ENCODE measurements at regions of chr11 and their contacts with region 1.

Region 1: DNA sequence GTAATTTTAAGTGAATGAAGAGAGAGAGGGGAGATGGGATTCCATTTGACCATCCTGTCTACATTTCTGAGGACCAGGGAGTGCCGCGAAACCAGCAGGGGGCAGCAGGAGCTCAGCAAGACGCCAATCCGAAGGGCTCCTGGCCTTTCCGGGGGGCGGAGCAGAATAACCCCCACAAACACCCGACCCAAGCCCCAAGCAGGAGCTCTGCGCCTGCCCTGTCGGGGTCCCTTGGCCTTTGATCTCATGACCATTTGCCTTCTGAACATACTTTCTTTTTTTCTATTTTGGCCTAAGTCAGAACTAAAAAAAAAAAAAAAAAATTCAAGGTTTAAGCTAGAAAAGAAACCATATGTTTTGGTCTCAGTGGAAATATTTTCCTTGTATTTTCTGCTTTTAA is 21.9 kb upstream of the SCN2B start:
- ATAC-seq: peak; percentile 53 to 95 (median 71)
- H3K4me3 ChIP-seq: no peak overlapping the region
- H3K27ac ChIP-seq: no peak overlapping the region
- H3K4me1 ChIP-seq: no peaks in the 10 kb centered on the region

Region 2: GRCh38 chr11:118359295-118359958 is 161.1 kb after region 1 on chr11 and contains the start of gene UBE4A:
- in situ Hi-C with region 1: loop called in 5 of 9 experiments (anchors 10 to 25 kb)
- ATAC-seq: peak; percentile 92 to 99 (median 96)
- H3K4me3 ChIP-seq: peak within 1 kb of the TSS; percentile 57 to 77 (median 73)
- H3K27ac ChIP-seq: peak within 1 kb of the TSS; percentile 79 to 82
- H3K4me1 ChIP-seq: peaks cover 5 to 7% of the 10 kb centered on the region in 2 donors
- total RNA-seq, gene UBE4A: 25.3 to 57.3 (median 39.1) TPM

Measured in motor neuron (in vitro differentiated cells).